Right ventricle myocardium inferior (tissue), 1 donor: ENCODE measurements at regions of chr20 and their contacts with region 1.

Region 1: GRCh38 chr20:2523919-2524708 is 12.3 kb upstream of the TMC2 start:
- DNase-seq: peak; percentile 95
- ATAC-seq: peak; percentile 72

Region 2: DNA sequence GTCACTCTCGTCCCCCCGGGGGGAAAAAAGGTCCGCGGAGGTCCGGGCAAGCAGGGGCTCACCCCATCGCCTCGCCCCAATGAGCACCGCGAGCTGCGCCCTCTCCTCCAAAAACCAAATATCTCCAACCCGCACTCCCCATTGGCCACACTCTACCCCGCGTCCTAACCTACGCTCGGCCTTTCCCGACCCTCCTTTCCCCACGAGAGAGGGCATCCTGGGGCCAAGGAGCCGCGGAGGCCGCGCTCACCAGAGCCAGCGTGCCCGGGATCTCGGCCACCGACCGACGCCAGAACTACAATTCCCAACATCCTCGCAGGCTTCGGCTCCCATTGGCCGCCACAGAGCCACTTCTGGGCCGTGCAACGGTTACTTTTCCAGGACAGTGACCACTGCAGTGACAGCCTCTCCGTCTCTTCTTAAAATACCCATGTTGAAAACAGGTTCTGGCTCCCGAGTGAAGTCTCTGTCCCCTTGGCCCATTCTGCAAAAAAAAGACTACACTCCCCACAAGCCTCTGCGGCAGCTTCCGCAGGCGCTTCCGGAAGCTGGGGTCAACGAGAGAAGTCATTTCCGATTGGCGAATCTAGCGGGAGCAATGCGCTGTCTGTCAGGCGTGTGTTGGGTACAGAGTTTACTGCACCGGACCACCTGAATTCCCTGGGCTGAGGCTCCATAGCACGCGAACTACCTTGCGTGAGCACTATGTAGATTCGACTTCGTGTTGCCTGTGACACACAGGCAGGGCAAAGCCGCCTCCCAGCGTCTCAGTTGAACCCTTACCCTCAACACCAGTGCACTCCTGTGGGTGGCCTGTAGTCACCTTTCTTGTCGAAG is 15.3 kb before region 1 on chr20 and contains the start of gene ZNF343:
- intact Hi-C with region 1: loop called (anchors 1 kb)
- DNase-seq: peak; percentile 92
- ATAC-seq: peak; percentile 94
- total RNA-seq, gene ZNF343: 5.8 TPM

Region 3: DNA sequence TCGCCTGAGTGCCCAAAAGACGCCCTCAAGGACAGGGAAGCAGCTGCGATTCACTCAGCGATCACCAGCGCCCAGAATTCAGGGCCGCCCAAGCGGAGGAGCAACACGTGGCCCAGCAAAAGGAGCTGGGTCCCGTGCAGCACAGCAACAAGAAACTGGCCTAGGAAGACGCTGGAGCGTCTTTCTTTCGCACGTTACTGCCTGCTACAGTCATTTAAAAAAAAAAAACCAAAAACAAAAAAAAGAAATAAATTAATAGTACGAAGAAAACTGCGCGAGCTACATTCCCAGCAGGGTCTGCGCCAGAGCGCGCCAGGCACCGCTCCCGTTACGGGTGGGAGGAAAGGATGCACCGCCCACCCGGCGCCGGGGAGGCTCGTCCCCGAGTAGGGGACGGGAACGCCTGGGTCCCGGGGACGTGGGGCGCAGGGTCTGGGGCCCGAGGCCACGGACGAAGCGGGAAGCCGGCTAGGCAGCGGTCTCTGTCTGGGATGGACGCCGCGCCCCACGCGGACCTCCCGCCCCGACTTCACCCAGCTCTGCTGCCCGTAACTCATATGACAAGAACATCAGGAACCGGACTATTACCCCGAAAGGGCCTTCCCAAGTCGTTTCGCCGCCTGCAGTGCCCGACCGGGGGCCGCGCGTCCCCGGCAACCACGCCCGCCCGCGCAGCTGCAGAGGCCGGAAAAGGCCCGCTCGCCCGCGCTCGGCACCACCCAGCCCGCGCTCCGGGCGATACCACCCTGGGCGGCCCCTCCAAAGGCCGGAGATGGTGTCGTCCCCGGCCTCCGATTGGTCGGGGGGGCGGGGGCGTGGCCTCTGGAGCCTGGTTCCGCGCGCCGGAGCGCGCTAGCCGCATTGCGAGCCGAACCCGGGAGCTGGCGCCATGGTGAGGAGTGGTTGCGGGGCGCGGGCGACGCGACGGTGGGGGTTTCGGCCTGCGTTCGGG is 127.9 kb after region 1 on chr20 and contains the start of gene NOP56:
- intact Hi-C with region 1: loop called (anchors 5 kb)
- DNase-seq: peak; percentile 94
- ATAC-seq: peak; percentile 99
- total RNA-seq, gene NOP56: 46.7 TPM